Psoas muscle (tissue), 8 donors: ENCODE measurements at regions of chr4 and their contacts with region 1.

Region 1: DNA sequence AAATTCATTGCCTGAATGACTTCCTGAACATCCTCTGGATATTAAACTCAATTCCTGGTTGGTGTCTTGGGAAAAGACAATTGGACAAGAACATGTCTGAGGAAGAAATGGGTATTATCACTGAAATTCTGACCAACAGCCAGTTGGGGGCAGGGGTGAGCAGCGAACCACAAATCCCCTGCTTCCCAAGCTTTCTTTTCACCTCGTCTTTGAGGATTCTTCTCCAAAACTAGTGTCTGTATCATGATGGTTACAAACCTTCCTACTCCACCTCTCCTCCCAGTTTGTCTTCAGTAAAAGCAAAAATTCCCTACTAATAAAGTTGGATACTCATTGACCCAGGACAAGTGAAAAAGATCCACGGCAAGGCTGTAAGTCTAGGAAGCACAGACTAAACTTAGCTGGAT is 48.3 kb upstream of the WDR1 start:
- DNase-seq: peak in 1 of 2 donors; percentile 19
- ATAC-seq: peak in 1 of 4 donors; percentile 55
- H3K4me3 ChIP-seq: no peak overlapping the region
- H3K27ac ChIP-seq: no peak overlapping the region
- H3K4me1 ChIP-seq: no peaks in the 10 kb centered on the region
- H3K27me3 ChIP-seq: no peaks in the 10 kb centered on the region
- CTCF ChIP-seq: peak; percentile 55

Region 2: GRCh38 chr4:10403633-10404445 is 239.0 kb after region 1 on chr4:
- intact Hi-C with region 1: loop called (anchors 5 to 10 kb)
- DNase-seq: no peak
- ATAC-seq: peak in 3 of 4 donors; percentile 53 to 73 (median 56)
- H3K4me3 ChIP-seq: no peak overlapping the region
- H3K27ac ChIP-seq: no peak overlapping the region
- H3K4me1 ChIP-seq: no peaks in the 10 kb centered on the region
- H3K27me3 ChIP-seq: no peaks in the 10 kb centered on the region
- CTCF ChIP-seq: peak; percentile 59

Region 3: DNA sequence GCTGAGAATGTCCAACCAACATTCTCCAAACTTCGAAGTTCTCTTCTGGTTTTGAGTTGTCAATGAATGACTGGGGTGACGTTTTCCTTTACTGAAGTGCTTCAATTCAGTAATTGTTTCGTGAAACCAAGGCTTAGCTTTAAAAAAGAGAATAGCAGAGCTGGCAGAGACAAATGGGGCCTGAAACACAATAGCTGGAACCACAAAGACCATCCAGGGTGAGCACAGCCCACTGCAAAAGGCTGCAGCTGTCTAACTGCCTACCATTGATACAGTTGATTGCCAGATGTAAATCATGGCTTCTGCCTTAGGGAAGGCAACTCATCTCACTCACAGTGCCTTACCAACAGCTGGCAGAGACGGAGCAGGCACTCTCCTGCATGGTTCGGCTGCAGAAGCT is 371.0 kb after region 1 on chr4:
- intact Hi-C with region 1: loop called in 1 of 2 experiments (anchors 5 kb)
- DNase-seq: no peak
- ATAC-seq: no peak
- H3K4me3 ChIP-seq: no peak overlapping the region
- H3K27ac ChIP-seq: no peak overlapping the region
- H3K4me1 ChIP-seq: no peaks in the 10 kb centered on the region
- H3K27me3 ChIP-seq: peaks cover 0 to 5% (median 0%) of the 10 kb centered on the region in 3 donors
- CTCF ChIP-seq: no peak

Region 4: DNA sequence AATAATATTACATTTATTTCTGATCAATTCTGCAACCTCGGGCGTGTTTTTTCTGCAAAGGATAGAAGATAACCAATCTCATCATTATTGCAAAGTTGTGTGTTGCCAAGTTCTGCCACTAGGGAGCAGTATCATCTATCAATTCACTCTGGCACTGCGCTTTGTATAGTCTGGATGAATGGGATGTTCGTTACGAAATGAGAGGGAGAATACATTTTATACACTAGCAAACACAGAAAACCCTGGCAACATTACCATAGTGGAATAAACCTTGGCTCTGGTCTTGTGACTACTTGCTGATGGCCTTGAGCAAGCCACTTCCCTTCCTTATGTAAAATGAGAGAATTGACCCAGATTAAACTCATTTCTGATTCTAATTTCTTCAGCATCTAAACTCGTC is 389.8 kb after region 1 on chr4:
- intact Hi-C with region 1: no loop called
- DNase-seq: no peak
- ATAC-seq: no peak
- H3K4me3 ChIP-seq: no peak overlapping the region
- H3K27ac ChIP-seq: no peak overlapping the region
- H3K4me1 ChIP-seq: no peaks in the 10 kb centered on the region
- H3K27me3 ChIP-seq: peaks cover 0 to 5% (median 4%) of the 10 kb centered on the region in 3 donors
- CTCF ChIP-seq: peak; percentile 66